OCI-LY7 (cell line): ENCODE measurements at regions of chrX and their contacts with region 1.

Region 1: DNA sequence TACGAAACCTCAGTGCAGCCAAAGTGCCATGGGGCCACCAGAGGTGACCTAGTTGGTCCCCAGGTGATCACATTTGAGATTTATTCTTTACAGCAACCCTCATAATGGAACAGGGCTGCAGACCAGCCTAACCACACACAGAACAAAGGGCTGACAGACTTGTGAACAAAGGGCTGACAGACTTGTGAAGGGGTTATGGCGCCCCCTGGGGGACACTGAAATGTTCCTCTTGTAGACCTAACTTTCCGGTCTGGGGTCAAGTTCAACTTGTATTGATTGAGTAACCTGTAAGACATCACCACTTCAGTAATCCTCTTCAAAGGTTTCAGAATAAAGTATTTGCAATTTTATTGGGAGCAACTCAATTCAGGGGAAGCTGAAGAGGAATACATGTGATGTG is 175.9 kb upstream of the RPS6KA3 start:
- DNase-seq: peak; percentile 76
- H3K4me3 ChIP-seq: no peak overlapping the region
- H3K27ac ChIP-seq: no peak overlapping the region
- H3K4me1 ChIP-seq: no peaks in the 10 kb centered on the region
- CTCF ChIP-seq: peak; percentile 82

Region 2: GRCh38 chrX:20141281-20142220 is 301.0 kb before region 1 on chrX and contains the start of gene EIF1AX:
- CTCF ChIA-PET with region 1: no interaction called
- POLR2A ChIA-PET with region 1: no interaction called
- intact Hi-C with region 1: loop called (anchors 5 kb)
- DNase-seq: peak; percentile 95
- H3K4me3 ChIP-seq: peak within 1 kb of the TSS; percentile 100
- H3K27ac ChIP-seq: peak within 1 kb of the TSS; percentile 51
- H3K4me1 ChIP-seq: peaks cover 13% of the 10 kb centered on the region
- CTCF ChIP-seq: no peak
- total RNA-seq, gene EIF1AX: 27.3 and 27.5 TPM in 2 replicates

Region 3: DNA sequence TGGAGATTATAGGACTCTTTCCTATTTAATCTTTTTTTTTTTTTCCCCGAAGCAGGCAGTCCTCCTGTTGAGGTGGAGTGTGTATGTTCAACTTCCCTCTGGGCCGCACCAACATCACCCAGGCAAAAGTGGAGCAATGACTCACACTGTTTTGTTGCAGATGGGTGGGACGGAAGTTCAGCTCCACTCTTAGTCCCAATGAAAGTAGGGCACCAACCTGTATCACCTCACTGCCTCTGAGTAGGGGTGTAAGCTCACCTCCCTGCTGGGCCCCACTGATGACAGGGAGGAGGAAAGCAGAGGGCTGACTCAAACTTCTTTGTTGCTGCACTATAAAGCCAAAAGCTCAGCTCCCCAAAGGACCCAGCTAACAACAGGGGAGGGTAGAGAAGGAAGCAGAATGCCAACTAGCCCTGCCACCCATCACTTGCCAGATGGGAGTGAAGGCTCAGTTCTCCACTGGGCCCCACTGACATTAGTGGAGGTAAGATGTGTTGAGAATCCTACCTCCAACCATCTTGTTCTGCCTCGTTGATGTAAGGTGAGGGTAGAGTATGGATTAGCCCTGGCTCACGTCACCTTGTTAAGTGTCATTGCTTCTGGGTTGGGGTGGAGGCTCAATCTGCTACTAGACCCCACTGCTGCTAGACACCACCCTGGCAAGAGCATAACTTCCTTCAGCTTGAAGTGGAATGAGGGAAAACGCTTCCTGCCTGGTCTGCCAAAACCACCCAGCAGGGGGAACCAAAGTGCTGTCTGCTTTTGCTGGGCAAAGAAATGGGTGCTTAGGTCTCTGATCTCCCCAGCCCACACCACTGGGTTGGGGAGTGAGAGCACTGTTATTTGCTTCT is 190.0 kb before region 1 on chrX:
- CTCF ChIA-PET with region 1: no interaction called
- POLR2A ChIA-PET with region 1: interaction called, 4 read pairs
- intact Hi-C with region 1: loop called (anchors 1 kb)
- DNase-seq: peak; percentile 52
- H3K4me3 ChIP-seq: no peak overlapping the region
- H3K27ac ChIP-seq: no peak overlapping the region
- H3K4me1 ChIP-seq: peaks cover 12% of the 10 kb centered on the region
- CTCF ChIP-seq: peak; percentile 69